GM12878 (cell line): ENCODE measurements at regions of chr14 and their contacts with region 1.

Region 1: DNA sequence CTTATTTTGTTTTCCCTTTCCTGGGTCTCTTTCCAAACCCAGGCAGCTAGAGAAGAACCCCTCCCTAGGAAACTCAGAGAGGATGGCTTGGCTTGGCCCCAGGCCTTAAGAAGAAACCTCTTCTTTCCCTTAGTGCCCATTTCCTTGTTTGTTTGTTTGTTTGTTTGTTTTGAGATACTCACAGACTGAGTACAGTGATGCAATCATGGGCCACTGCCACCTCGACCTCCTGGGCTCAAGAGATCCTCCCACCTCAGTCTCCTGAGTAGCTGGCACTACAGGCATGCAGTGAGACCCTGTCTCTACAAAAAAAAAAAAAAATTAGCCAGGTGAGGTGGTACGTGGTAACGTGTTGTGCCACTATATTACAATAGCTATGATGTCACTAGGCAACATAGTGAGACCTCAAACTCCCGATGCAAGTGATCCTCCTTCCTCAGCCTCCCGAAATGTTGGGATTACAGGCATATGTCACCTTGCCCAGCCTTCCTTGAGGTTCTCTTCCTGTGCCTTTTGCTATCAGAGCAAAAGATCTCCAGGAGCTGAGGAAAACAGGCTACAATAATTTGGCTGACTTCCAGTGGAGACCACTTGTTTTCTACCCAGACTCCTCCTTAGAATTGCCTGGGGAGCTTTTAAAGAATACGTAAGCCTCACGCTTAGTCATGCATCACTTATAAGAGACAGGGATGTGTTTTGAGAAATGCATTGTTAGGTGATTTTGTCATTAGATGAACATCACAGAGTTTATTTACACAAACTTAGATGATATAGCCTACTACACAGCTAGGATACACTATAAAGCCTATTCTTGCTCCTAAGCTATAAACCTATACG is 34.5 kb upstream of the LGALS3 start:
- DNase-seq: no peak
- ATAC-seq: no peak
- H3K4me3 ChIP-seq: no peak overlapping the region
- H3K27ac ChIP-seq: no peak overlapping the region
- H3K4me1 ChIP-seq: peaks cover 25% of the 10 kb centered on the region
- H3K27me3 ChIP-seq: no peaks in the 10 kb centered on the region
- CTCF ChIP-seq: no peak
- EP300 ChIP-seq: no peak
- POLR2A ChIP-seq: no peak
- RAD21 ChIP-seq: no peak

Region 2: DNA sequence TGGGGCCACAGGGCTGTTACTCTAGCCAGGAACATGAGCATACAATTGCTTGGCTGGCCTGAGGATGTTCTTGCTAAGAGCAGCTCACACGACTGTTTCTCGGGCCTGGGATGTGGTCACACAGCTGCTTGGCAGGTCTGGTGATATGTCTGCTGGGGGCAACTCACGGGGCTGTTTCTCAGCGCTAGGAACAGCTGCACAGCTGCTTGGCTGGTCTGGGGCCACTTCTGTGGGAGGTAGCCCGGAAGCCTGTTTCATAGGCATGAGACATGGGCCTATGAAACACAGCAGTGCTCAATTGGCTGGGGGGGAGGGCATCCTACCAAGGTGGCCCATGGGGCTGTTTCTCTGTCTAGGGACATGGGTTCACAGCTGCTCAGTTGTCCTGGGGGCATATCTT is 1868.0 kb before region 1 on chr14:
- CTCF ChIA-PET with region 1: no interaction called
- POLR2A ChIA-PET with region 1: interaction called, 10 read pairs
- RAD21 ChIA-PET with region 1: no interaction called
- SMC1A ChIA-PET with region 1: no interaction called
- in situ Hi-C with region 1: no loop called
- intact Hi-C with region 1: no loop called
- DNase-seq: no peak
- ATAC-seq: no peak
- H3K4me3 ChIP-seq: no peak overlapping the region
- H3K27ac ChIP-seq: no peak overlapping the region
- H3K4me1 ChIP-seq: no peaks in the 10 kb centered on the region
- H3K27me3 ChIP-seq: no peaks in the 10 kb centered on the region
- CTCF ChIP-seq: no peak
- EP300 ChIP-seq: no peak
- POLR2A ChIP-seq: no peak
- RAD21 ChIP-seq: no peak

Region 3: DNA sequence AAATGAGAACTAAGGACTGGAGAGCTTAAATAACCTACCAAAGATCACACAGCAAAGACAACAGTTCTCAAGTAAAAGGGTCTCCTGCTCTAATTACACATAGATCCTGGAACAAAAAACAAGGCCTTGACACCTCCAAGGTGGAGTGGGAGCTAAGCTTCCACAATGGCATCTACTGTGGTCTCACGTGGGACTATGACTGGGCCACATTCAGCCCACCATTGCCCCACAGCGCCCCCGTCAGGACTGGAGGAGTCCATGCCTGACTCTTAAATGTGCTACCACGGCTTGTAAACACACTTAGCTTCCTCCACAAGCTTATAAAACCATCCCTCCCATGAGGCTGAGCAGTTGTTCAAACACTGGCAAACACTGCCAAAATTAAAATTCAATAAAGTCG is 280.5 kb before region 1 on chr14:
- CTCF ChIA-PET with region 1: no interaction called
- POLR2A ChIA-PET with region 1: no interaction called
- RAD21 ChIA-PET with region 1: no interaction called
- SMC1A ChIA-PET with region 1: no interaction called
- in situ Hi-C with region 1: no loop called
- intact Hi-C with region 1: no loop called
- DNase-seq: no peak
- ATAC-seq: peak; percentile 68
- H3K4me3 ChIP-seq: no peak overlapping the region
- H3K27ac ChIP-seq: no peak overlapping the region
- H3K4me1 ChIP-seq: no peaks in the 10 kb centered on the region
- H3K27me3 ChIP-seq: no peaks in the 10 kb centered on the region
- CTCF ChIP-seq: peak in 2 of 3 experiments; percentile 5 to 25; a peak in 1 of 6 replicates
- EP300 ChIP-seq: no peak
- POLR2A ChIP-seq: no peak
- RAD21 ChIP-seq: no peak

Region 4: DNA sequence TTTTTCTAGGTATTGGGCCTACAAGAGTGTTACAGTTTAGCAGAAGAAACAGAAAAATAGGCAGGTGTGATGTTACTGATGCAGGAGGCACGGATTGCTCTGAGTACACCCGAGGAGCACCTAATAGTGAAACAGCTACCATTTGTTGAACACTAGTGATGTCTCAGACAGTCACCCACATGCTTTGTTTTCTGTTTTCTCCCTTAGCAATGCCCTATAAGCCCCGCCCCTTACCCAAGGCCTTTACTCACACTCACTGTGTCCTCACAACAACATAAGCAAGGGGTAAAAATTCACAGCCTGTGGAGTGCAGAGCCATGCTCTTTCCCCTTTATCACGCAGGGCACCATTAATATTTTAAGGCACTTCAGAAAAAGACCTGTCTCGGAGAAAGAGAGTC is 17.4 kb before region 1 on chr14:
- CTCF ChIA-PET with region 1: interaction called, 49 read pairs
- POLR2A ChIA-PET with region 1: interaction called, 16 read pairs
- RAD21 ChIA-PET with region 1: interaction called, 30 read pairs
- SMC1A ChIA-PET with region 1: interaction called, 32 read pairs
- in situ Hi-C with region 1: no loop called
- intact Hi-C with region 1: loop called (anchors 2 kb)
- DNase-seq: no peak
- ATAC-seq: peak; percentile 48
- H3K4me3 ChIP-seq: no peak overlapping the region
- H3K27ac ChIP-seq: no peak overlapping the region; the same call in 1 of the 2 replicates
- H3K4me1 ChIP-seq: peaks cover 40% of the 10 kb centered on the region
- H3K27me3 ChIP-seq: no peaks in the 10 kb centered on the region
- CTCF ChIP-seq: no peak
- EP300 ChIP-seq: no peak
- POLR2A ChIP-seq: no peak
- RAD21 ChIP-seq: no peak